Activated T-helper 1 cell treated with anti-CD3 and anti-CD28 coated beads, Interleukin-12 subunit alpha, Interleukin-12 subunit beta, Interleukin-2, Interleukin-4 antibody, amounts not matched to agents 30 ng/mL and 10 ng/mL and 1 ng/mL, durations not matched to agents 14 hours and 24 hours and 36 hours (primary cell): ENCODE measurements at regions of chr17 and their contacts with region 1.

Region 1: DNA sequence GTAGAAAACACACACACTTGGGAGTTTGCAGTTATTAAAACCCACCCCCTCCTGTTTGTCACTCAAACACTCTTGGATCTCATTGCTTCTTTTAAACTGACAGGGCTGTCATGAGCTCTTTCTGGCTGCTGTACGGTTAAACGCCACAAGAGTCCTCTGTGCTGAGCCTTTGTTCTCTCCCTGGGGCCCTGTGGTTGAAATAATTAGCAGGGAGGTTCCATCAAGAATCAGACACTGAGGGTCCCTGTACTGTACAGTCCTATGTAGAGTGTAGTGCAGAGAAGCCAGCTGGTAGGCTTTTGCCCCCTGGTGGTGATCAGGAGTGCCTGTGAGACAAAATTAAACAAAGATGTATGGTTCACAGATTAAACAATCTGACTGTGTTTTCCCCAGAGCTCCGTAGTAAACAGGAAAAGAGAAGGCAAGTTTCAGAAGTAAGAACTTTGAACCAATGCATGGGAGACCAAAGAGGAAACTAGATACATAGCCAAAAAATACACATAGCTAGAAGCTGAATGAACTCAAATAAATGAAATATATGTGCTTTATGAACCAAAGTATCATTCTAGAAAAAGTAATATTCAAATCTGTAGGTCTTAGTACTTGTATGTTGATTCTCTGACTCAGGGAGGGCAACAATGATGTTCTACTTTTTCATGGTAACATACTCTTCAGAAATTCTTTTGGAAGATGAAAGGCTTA is 1.4 kb upstream of the SSH2 start:
- DNase-seq: peak; percentile 62
- H3K4me3 Mint-ChIP-seq: no peak overlapping the region
- H3K27ac Mint-ChIP-seq: no peak overlapping the region
- H3K4me1 Mint-ChIP-seq: peaks cover 28% of the 10 kb centered on the region
- H3K27me3 Mint-ChIP-seq: peaks cover 1% of the 10 kb centered on the region

Region 2: GRCh38 chr17:29389982-29390850 is 541.2 kb before region 1 on chr17 and contains the start of gene TAOK1:
- intact Hi-C with region 1: loop called (anchors 2 kb)
- DNase-seq: peak; percentile 97
- H3K4me3 Mint-ChIP-seq: peak within 1 kb of the TSS; percentile 98
- H3K27ac Mint-ChIP-seq: peak within 1 kb of the TSS; percentile 95
- H3K4me1 Mint-ChIP-seq: peaks cover 43% of the 10 kb centered on the region
- H3K27me3 Mint-ChIP-seq: no peaks in the 10 kb centered on the region
- total RNA-seq, gene TAOK1: 45.9 and 46.9 TPM in 2 replicates

Region 3: GRCh38 chr17:29589524-29590410 is 341.6 kb before region 1 on chr17 and contains the start of gene GIT1:
- intact Hi-C with region 1: loop called (anchors 2 kb)
- DNase-seq: peak; percentile 84
- H3K4me3 Mint-ChIP-seq: peak within 1 kb of the TSS; percentile 96
- H3K27ac Mint-ChIP-seq: peak within 1 kb of the TSS; percentile 87
- H3K4me1 Mint-ChIP-seq: peaks cover 63% of the 10 kb centered on the region
- H3K27me3 Mint-ChIP-seq: no peaks in the 10 kb centered on the region
- total RNA-seq, gene GIT1: 81.0 and 87.5 TPM in 2 replicates

Region 4: DNA sequence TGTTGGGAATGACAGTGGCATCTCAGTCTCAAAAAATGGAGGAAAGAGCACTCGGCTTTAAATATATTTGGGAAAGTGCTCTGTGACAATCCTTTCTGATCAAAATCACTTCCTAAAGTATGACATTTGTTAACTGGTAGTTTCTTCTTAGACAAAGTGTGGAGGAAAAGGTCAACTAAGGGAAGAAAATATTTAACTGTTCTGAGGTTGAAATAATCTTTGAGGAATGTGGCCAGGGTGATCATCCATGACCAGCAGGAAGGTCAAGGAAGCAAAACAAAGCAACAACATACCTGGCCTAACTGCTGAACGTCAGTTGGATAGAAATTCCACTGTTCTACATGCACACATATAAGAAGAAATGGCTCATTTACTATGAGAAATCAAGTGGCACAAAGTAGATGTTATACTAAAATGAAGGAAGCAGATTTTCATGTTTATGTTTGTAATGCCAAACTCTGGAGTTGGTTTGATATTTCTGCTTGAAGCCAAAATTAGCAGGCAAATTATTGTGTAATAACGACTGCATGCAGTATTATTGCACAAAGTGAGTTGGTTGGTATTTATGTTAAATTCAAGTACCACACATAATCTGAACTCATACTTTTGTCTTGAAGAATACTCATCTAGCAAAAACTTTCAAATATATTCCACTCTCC is 221.4 kb before region 1 on chr17:
- intact Hi-C with region 1: loop called (anchors 1 kb)
- DNase-seq: no peak
- H3K4me3 Mint-ChIP-seq: no peak overlapping the region
- H3K27ac Mint-ChIP-seq: no peak overlapping the region
- H3K4me1 Mint-ChIP-seq: peaks cover 48% of the 10 kb centered on the region
- H3K27me3 Mint-ChIP-seq: no peaks in the 10 kb centered on the region

Region 5: DNA sequence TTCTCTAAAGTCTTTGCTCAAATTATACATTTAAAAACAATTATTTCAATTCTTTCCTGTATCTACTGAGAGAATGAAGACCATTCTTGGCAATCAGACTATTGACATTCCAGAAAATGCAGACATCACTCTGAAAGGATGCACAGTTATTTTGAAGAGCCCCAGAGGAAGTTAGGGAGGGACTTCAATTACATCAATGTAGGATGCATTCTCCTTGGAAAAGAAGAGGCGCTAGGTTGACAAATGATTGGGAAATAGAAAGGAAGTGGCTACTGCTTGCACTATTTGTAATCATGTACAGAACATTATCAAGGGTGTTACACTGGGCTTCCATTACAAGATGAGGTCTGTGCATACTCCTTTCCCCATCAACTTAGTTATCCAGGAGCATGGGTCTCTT is 75.7 kb before region 1 on chr17:
- intact Hi-C with region 1: no loop called
- DNase-seq: no peak
- H3K4me3 Mint-ChIP-seq: no peak overlapping the region
- H3K27ac Mint-ChIP-seq: no peak overlapping the region
- H3K4me1 Mint-ChIP-seq: peaks cover 7% of the 10 kb centered on the region
- H3K27me3 Mint-ChIP-seq: no peaks in the 10 kb centered on the region

Region 6: DNA sequence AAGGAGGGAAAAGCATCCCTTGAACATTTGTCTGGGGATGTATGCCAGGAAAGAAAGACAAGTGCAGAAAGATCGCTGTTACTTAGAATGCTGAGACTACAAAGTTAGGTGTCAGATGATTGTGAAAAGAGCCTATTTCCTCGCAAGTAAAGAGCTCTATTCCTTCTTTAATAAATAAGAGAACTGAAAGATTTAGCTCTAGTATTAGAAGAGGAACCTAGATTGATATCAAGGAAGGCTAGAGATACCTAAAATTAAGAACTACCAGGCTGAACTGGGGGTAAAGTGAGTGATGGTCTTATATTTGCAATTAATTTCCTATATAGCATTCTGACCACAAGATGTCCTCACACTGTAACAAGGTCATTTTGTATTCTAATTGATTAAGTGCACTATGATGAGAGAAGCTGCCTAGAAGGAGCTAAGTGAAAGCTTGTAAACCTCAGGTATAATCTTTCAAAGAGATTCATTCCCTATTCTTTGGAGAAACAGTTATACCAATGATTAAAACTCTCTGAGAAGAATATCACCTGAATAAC is 63.7 kb before region 1 on chr17:
- intact Hi-C with region 1: loop called (anchors 1 kb)
- DNase-seq: no peak
- H3K4me3 Mint-ChIP-seq: no peak overlapping the region
- H3K27ac Mint-ChIP-seq: no peak overlapping the region
- H3K4me1 Mint-ChIP-seq: peaks cover 5% of the 10 kb centered on the region
- H3K27me3 Mint-ChIP-seq: peaks cover 1% of the 10 kb centered on the region

Region 7: GRCh38 chr17:29945281-29945680 is 13.9 kb after region 1 on chr17:
- intact Hi-C with region 1: no loop called
- DNase-seq: no peak
- H3K4me3 Mint-ChIP-seq: no peak overlapping the region
- H3K27ac Mint-ChIP-seq: no peak overlapping the region
- H3K4me1 Mint-ChIP-seq: peaks cover 6% of the 10 kb centered on the region
- H3K27me3 Mint-ChIP-seq: peaks cover under 1% of the 10 kb centered on the region

Region 8: DNA sequence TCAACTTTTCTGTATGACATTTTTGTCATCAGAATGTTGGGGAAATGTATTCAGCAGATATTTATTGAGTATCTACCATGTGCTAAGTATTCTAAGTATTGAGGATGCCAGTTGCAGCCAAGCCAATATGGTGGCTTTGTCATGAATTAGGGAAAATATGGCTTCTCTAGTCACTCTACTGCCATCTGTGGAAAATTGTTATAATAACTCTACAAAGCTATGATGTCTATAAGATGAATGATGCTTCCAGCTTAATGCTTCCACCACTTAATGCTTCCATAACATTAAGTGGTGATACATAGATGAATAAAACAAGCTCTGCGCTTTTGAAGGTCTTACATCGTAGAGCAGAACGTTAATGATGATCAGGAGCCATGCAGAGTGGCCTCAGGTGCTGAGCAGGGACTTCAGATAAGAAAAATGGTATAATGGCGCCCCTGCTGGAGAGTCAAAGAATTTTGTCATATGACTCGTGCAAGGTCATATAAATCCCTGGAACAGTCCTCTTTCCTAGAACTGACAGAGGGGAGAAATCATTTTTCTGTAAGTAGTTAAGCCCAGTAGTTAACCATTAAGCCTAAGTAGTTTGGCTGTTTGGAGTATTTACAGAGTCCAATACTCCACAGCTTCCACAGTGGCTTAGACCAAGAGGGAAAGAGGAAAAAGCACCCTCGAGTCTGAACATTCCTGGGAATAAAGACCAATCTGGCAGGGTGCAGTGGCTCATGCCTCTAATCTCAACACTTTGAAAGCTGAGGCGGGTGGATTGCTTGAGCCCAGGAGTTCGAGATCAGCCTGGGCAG is 405.2 kb after region 1 on chr17:
- intact Hi-C with region 1: loop called (anchors 5 kb)
- DNase-seq: peak; percentile 47
- H3K4me3 Mint-ChIP-seq: no peak overlapping the region
- H3K27ac Mint-ChIP-seq: no peak overlapping the region
- H3K4me1 Mint-ChIP-seq: peaks cover 42% of the 10 kb centered on the region
- H3K27me3 Mint-ChIP-seq: peaks cover 3% of the 10 kb centered on the region